ENCODE measurements at regions of chr17 and their contacts with region 1.

Region 1: DNA sequence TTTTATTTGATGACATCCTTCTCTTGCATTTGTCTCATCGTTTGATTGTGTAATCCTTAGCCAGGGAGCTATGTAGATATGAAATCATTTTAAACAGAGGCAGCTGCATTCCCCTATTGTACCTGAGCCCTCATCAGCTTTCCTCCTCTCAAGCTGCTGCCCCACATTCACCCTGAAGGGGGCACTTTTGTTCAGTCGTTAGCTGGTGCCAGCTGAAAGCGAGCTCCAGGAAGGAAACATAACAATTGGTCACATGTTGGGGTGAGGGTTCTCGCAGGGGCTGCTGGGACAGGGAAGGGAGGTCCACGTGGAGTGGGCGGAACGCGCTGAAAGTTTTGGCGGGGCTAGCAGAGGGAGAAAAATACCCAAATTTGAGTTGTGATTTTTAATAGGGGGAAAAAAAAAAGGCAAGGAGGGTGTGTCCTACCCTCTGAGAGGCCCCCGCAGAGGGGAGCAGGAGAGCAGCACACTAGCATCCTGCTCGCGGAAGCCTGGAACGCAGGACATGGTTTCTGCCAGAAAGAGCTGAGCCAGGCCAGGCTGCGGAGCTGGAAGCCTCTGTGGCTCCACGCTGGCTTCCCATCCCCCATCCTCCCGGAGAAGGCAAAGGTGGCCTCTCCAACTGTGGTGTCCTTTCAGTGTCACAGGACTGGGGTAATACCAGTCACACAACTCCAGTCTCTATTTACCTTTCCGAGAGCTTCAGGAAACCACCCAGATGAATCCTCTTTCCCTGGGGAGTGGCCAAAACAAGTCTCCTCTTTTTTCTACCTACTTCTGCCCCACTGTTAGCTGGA is 8.5 kb upstream of the MSL1 start:
- DNase-seq: peak; percentile 96
- ATAC-seq: peak; percentile 82
- H3K4me3 Mint-ChIP-seq: peak overlapping the region; percentile 72
- H3K27ac Mint-ChIP-seq: peak overlapping the region; percentile 86
- H3K4me1 Mint-ChIP-seq: peaks cover 55% of the 10 kb centered on the region
- H3K27me3 Mint-ChIP-seq: no peaks in the 10 kb centered on the region

Region 2: DNA sequence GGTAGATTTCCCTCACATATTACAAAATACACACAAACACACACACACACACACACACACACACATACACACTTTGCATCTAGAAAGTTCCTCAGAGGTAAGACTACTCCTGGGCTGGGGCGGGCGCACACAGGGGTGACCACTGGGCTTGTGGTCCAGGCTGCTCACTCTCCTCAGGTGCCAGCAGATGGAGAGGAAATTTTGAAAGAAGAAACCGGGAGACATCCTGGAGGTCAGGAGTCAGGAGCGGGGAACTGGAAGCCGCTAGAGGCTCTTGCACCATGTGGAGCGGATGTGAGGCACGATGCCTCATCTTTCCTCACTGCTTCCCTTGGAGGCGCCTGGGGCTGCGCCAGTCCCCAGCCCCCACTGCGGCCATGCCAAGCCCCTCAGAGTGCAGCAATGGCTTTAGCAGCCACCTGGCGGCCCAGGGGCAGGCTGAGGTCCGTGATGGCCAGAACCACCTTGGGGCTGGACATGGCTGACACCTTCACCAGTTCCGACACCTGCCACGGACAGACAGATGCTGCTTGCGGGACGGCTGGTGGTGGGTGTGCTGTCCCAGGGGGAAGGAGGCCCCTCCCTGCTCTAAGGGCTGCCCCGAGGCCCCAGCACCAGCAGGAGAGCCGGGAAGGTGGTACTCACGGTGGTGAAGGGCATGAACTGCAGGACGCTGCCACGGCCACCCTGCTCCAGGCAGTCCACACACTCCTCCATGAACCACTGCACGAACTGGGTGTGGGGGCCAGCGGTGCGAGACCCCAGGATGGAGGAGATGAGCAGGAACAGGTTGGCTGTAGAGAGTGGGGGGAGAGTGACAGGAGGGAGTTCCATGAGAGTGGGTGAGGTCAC is 93.9 kb before region 1 on chr17:
- CTCF ChIA-PET with region 1: interaction called, 20 read pairs
- POLR2A ChIA-PET with region 1: no interaction called
- intact Hi-C with region 1: no loop called
- DNase-seq: no peak
- ATAC-seq: no peak
- H3K4me3 Mint-ChIP-seq: no peak overlapping the region
- H3K27ac Mint-ChIP-seq: no peak overlapping the region
- H3K4me1 Mint-ChIP-seq: no peaks in the 10 kb centered on the region
- H3K27me3 Mint-ChIP-seq: no peaks in the 10 kb centered on the region

Region 3: DNA sequence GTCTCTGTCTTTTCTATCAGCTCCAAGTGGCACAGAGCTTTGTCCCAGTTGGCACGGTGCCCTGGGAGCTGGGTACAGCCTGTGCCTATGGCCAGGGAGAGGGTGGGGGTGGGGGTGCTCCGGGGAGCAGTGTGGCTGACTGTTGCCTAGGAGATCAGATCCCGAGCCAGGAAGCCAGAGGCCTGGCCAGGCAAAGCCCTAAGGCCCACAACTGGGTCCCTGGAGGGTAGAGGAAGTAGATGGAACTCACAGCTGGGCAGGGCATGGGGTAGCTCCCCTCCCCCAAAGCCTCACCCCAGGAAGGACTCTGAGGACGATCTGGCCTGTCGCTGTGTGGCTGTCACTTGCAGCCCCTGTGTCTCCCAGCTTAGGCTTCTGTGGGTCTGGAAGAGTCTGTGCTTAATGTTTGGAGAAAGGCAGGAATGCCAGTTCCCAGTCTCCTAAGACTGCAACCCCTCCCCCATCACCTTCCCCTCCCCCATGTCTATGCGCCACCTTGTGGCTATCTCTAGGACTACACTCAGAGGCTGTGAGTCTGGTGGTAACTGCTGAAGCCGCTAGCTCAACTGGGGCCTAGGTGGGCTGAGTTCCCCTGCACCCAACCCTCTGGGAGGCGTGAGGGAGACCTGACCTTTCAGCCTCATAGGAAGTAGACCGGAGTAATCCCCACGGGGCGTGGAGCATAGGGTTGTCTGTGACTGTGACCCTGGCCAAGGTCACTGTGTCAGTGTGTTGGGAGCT is 37.9 kb before region 1 on chr17:
- CTCF ChIA-PET with region 1: interaction called, 59 read pairs
- POLR2A ChIA-PET with region 1: no interaction called
- intact Hi-C with region 1: no loop called
- DNase-seq: peak; percentile 83
- ATAC-seq: peak; percentile 88
- H3K4me3 Mint-ChIP-seq: no peak overlapping the region
- H3K27ac Mint-ChIP-seq: peak overlapping the region; percentile 72
- H3K4me1 Mint-ChIP-seq: peaks cover 33% of the 10 kb centered on the region
- H3K27me3 Mint-ChIP-seq: no peaks in the 10 kb centered on the region

Region 4: GRCh38 chr17:40139566-40140058 is 26.3 kb after region 1 on chr17:
- CTCF ChIA-PET with region 1: interaction called, 26 read pairs
- POLR2A ChIA-PET with region 1: interaction called, 16 read pairs
- intact Hi-C with region 1: loop called in 1 of 2 experiments (anchors 1 kb)
- DNase-seq: no peak
- ATAC-seq: peak; percentile 5
- H3K4me3 Mint-ChIP-seq: peak overlapping the region; percentile 90
- H3K27ac Mint-ChIP-seq: peak overlapping the region; percentile 98
- H3K4me1 Mint-ChIP-seq: peaks cover 39% of the 10 kb centered on the region
- H3K27me3 Mint-ChIP-seq: no peaks in the 10 kb centered on the region

Region 5: DNA sequence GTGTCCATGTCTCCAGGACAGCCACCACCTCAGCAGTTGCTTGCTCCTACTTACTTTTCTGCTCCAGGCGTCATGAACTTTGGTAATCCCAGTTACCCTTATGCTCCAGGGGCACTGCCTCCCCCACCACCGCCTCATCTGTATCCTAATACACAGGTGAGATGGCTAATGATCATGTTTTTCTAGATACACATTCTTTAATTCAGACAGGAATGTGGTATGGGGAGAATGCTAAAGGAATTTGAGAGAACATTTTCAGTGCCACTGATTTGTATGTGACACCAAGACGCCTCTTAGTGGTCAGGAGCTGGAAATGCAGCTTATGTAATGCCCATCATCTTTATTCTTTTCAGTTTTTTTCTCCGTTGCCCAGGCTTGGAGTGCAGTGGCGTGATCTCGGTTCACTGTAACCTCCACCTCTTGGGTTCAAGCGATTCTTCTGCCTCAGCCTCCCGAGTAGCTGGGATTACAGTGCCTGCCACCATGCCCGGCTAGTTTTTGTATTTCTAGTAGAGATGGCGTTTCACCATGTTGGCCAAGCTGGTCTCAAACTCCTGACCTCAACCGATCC is 55.0 kb after region 1 on chr17:
- CTCF ChIA-PET with region 1: interaction called, 88 read pairs
- POLR2A ChIA-PET with region 1: interaction called, 5 read pairs
- intact Hi-C with region 1: loop called (anchors 1 kb)
- DNase-seq: peak; percentile 45
- ATAC-seq: peak; percentile 74
- H3K4me3 Mint-ChIP-seq: no peak overlapping the region
- H3K27ac Mint-ChIP-seq: peak overlapping the region; percentile 48
- H3K4me1 Mint-ChIP-seq: no peaks in the 10 kb centered on the region
- H3K27me3 Mint-ChIP-seq: no peaks in the 10 kb centered on the region

Region 6: GRCh38 chr17:40219073-40219860 is 106.0 kb after region 1 on chr17 and contains the start of gene WIPF2:
- CTCF ChIA-PET with region 1: interaction called, 12 read pairs
- POLR2A ChIA-PET with region 1: interaction called, 3 read pairs
- intact Hi-C with region 1: loop called in 1 of 2 experiments (anchors 2 kb)
- DNase-seq: peak; percentile 98
- ATAC-seq: peak; percentile 96
- H3K4me3 Mint-ChIP-seq: peak within 1 kb of the TSS; percentile 89
- H3K27ac Mint-ChIP-seq: peak within 1 kb of the TSS; percentile 100
- H3K4me1 Mint-ChIP-seq: peaks cover 26% of the 10 kb centered on the region
- H3K27me3 Mint-ChIP-seq: no peaks in the 10 kb centered on the region
- total RNA-seq, gene WIPF2: 18.4 to 23.6 TPM